ENCODE measurements at regions of chr1 and their contacts with region 1.

Region 1: DNA sequence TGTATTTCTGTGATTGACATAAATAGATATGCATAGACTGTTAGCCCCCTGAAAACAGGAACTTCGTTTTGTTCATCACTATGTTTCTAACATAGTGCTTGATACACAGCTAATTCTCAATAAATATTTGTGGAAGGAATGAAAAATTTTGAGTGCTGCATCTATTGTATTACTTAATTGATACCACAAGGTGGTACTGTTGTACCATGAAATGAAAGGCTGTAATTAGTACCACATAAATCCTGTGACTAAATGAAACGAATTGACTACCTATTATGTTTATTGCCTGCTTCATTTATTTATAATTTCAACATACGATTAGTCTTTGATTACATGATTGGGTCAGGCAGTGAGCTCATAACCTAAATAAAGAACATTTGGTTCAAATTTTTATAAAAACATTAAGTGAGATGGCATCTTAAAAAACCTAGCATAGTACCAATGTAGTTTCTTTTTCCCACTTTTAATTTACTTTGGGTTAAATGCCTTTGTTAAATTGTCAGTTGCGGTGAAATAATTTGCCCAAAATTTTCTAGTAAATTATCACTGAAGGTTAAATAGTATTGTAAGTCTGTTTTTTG is 15.0 kb upstream of the TGFB2 start:
- DNase-seq: peak in 3 of 14 experiments; percentile 52 to 65 (median 61)
- ATAC-seq: peak; percentile 56
- H3K4me3 ChIP-seq: no peak overlapping the region
- H3K4me3 Mint-ChIP-seq: no peak overlapping the region
- H3K27ac ChIP-seq: no peak overlapping the region
- H3K27ac Mint-ChIP-seq: no peak overlapping the region
- H3K4me1 ChIP-seq: no peaks in the 10 kb centered on the region
- H3K4me1 Mint-ChIP-seq: no peaks in the 10 kb centered on the region
- H3K27me3 ChIP-seq: no peaks in the 10 kb centered on the region
- H3K27me3 Mint-ChIP-seq: no peaks in the 10 kb centered on the region
- CTCF ChIP-seq: peak; percentile 79

Region 2: GRCh38 chr1:217805787-217806186 is 524.3 kb before region 1 on chr1:
- CTCF ChIA-PET with region 1: no interaction called
- POLR2A ChIA-PET with region 1: no interaction called
- intact Hi-C with region 1: no loop called
- DNase-seq: no peak
- ATAC-seq: no peak
- H3K4me3 ChIP-seq: no peak overlapping the region
- H3K4me3 Mint-ChIP-seq: no peak overlapping the region
- H3K27ac ChIP-seq: no peak overlapping the region
- H3K27ac Mint-ChIP-seq: no peak overlapping the region
- H3K4me1 ChIP-seq: no peaks in the 10 kb centered on the region
- H3K4me1 Mint-ChIP-seq: no peaks in the 10 kb centered on the region
- H3K27me3 ChIP-seq: no peaks in the 10 kb centered on the region
- H3K27me3 Mint-ChIP-seq: no peaks in the 10 kb centered on the region
- CTCF ChIP-seq: no peak

Region 3: DNA sequence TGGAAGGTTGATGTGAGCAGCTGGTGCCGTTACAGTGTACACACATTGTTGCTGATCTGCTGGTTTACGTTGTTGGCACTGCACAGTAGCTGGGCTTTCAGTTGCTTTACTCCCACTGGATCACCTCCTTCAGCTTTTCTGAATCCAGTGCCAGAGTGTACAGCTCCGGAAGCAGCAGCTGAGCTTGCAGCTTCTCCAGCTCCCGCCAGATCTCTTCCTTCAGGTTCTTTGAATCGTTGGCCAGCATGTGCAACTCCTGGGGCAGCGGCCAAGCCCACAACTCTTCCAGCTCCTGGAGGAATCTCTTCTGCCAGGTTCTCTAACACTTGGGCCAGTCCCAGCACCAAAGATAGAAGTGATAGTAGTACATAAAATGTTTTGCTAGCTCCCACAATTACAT is 194.8 kb before region 1 on chr1:
- CTCF ChIA-PET with region 1: no interaction called
- POLR2A ChIA-PET with region 1: no interaction called
- intact Hi-C with region 1: no loop called
- DNase-seq: no peak
- ATAC-seq: no peak
- H3K4me3 ChIP-seq: no peak overlapping the region
- H3K4me3 Mint-ChIP-seq: no peak overlapping the region
- H3K27ac ChIP-seq: no peak overlapping the region
- H3K27ac Mint-ChIP-seq: no peak overlapping the region
- H3K4me1 ChIP-seq: no peaks in the 10 kb centered on the region
- H3K4me1 Mint-ChIP-seq: no peaks in the 10 kb centered on the region
- H3K27me3 ChIP-seq: no peaks in the 10 kb centered on the region
- H3K27me3 Mint-ChIP-seq: no peaks in the 10 kb centered on the region
- CTCF ChIP-seq: no peak

Region 4: DNA sequence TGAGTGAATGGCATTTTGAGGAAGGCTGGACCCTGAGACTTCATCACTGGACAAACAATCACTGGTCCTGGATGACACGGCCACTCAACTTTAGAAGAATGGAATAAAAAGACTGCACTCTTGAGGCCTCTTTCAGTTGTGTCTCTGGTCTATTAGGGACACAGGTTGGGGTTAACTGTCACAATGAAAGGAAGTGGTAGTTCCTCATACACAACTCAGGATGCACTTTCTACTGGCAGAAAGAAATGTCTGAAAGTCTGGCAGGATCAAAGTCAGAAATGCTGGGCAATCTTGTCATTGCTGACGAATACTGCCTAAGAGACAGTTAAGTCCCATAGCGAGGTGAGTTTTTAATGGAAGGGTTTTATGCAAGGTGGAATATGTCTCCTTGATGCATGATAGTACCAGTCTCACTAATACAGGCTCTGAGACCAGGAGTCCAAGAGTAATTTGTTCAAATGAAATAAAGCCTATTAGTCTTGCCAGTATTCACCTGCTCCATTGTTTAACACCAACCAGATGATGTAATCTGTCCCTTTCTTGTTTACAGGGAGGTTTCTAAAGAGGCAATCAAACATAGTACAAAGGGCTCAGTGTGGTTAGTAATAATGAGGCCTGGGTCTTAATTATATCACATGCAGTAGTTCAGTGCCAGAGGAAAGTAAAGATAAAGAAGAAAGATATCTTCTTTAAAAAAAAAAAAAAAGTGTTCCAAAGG is 56.2 kb before region 1 on chr1:
- CTCF ChIA-PET with region 1: no interaction called
- POLR2A ChIA-PET with region 1: no interaction called
- intact Hi-C with region 1: no loop called
- DNase-seq: no peak
- ATAC-seq: no peak
- H3K4me3 ChIP-seq: no peak overlapping the region
- H3K4me3 Mint-ChIP-seq: no peak overlapping the region
- H3K27ac ChIP-seq: no peak overlapping the region
- H3K27ac Mint-ChIP-seq: no peak overlapping the region
- H3K4me1 ChIP-seq: no peaks in the 10 kb centered on the region
- H3K4me1 Mint-ChIP-seq: no peaks in the 10 kb centered on the region
- H3K27me3 ChIP-seq: no peaks in the 10 kb centered on the region
- H3K27me3 Mint-ChIP-seq: peaks cover 4% of the 10 kb centered on the region
- CTCF ChIP-seq: no peak

Region 5: DNA sequence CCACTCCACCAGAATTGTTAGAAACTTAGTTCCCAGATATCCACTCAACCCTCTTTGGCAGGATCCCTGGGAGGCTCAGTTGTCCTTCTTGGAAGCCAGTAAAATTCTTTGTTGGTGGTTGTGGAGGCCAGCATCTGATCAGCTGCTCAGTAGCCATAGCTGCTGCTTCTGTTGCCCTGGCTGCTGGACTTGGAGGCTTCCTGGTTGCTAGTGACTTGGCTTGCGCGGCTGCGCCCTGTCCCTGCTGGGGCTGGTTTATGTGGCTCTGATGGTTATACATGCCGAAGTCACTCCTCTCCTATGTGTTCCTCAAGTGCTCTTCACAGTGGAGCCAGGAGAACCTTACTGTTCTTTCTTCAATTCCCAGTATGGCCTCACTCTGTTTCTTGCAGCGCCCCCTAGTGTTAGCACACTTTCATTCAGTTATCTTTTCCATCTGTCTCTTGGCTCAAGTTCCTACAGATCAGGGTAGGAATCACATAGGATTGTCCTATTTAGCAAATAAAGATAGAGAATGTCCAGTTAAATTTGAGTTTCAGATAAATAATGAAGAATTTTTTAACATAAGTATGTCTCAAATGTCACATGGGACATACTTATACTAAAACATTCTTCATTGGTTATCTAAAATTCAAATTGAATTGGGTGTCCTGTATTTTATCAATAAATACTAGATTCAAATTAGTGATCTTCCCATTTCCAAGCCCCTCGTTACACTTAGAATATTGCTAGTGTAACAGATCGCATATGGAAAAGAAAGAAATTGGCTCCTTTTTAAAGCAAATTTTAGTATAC is 191.4 kb after region 1 on chr1:
- CTCF ChIA-PET with region 1: no interaction called
- POLR2A ChIA-PET with region 1: no interaction called
- intact Hi-C with region 1: loop called (anchors 5 to 10 kb)
- DNase-seq: peak in 5 of 14 experiments; percentile 2 to 48 (median 32)
- ATAC-seq: no peak
- H3K4me3 ChIP-seq: no peak overlapping the region
- H3K4me3 Mint-ChIP-seq: no peak overlapping the region
- H3K27ac ChIP-seq: no peak overlapping the region
- H3K27ac Mint-ChIP-seq: no peak overlapping the region
- H3K4me1 ChIP-seq: no peaks in the 10 kb centered on the region
- H3K4me1 Mint-ChIP-seq: no peaks in the 10 kb centered on the region
- H3K27me3 ChIP-seq: no peaks in the 10 kb centered on the region
- H3K27me3 Mint-ChIP-seq: peaks cover 5% of the 10 kb centered on the region
- CTCF ChIP-seq: peak; percentile 58

Region 6: GRCh38 chr1:219416594-219417238 is 1086.6 kb after region 1 on chr1:
- CTCF ChIA-PET with region 1: no interaction called
- POLR2A ChIA-PET with region 1: no interaction called
- intact Hi-C with region 1: loop called (anchors 1 kb)
- DNase-seq: peak; percentile 19 to 59 (median 37)
- ATAC-seq: peak; percentile 29
- H3K4me3 ChIP-seq: no peak overlapping the region
- H3K4me3 Mint-ChIP-seq: no peak overlapping the region
- H3K27ac ChIP-seq: no peak overlapping the region
- H3K27ac Mint-ChIP-seq: no peak overlapping the region
- H3K4me1 ChIP-seq: no peaks in the 10 kb centered on the region
- H3K4me1 Mint-ChIP-seq: no peaks in the 10 kb centered on the region
- H3K27me3 ChIP-seq: no peaks in the 10 kb centered on the region
- H3K27me3 Mint-ChIP-seq: no peaks in the 10 kb centered on the region
- CTCF ChIP-seq: peak; percentile 75